OCI-LY7 (cell line): ENCODE measurements at regions of chr6 and their contacts with region 1.

Region 1: DNA sequence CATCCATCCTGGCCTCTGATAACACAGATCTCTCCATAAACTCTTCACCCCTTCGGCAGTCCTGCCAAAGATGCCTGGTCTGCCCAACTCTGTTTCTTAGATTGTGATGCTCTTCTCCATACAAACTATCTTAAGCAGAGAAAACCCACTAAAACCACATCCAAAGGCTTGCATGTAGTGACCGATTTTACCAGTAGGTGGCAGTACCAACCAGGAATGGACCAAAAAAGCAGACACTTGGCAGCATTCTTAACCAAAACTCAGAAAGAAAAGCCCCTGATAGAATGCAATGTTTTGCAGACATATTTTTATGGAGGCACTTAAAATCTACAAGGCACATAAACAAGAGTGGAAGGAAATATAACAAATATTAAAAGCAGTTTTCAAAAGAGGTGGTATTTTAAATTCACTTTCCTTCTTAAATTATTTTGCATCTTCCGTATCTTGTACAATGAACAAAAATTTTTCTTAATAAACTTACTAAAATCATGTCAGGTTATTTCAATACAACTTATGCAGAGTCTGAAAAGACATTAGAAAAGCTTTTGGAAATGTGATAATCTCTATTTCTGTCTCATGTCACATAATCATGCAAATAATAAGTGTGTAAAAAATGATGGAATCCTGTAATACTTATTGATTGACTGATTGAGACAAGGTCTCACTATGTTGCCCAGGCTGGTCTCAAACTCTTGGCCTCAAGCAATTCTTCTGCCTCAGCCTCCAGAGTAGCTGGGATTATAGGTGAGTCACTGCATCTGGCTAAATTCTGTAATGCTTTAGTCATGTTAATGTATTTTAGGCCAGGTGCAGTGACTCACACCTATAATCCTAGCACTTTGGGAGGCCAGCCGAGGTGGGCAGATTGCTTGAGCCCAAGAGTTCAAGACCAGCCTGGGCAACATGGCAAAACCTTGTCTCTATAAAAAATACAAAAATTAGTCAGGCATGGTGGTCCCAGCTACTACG is 29.4 kb downstream of the LRP11 start:
- DNase-seq: peak; percentile 69
- H3K4me3 ChIP-seq: no peak overlapping the region
- H3K27ac ChIP-seq: no peak overlapping the region
- H3K4me1 ChIP-seq: peaks cover 9% of the 10 kb centered on the region
- CTCF ChIP-seq: peak; percentile 99

Region 2: GRCh38 chr6:149711711-149712110 is 123.1 kb before region 1 on chr6:
- CTCF ChIA-PET with region 1: no interaction called
- POLR2A ChIA-PET with region 1: no interaction called
- intact Hi-C with region 1: no loop called
- DNase-seq: no peak
- H3K4me3 ChIP-seq: no peak overlapping the region
- H3K27ac ChIP-seq: no peak overlapping the region
- H3K4me1 ChIP-seq: peaks cover 42% of the 10 kb centered on the region
- CTCF ChIP-seq: no peak

Region 3: DNA sequence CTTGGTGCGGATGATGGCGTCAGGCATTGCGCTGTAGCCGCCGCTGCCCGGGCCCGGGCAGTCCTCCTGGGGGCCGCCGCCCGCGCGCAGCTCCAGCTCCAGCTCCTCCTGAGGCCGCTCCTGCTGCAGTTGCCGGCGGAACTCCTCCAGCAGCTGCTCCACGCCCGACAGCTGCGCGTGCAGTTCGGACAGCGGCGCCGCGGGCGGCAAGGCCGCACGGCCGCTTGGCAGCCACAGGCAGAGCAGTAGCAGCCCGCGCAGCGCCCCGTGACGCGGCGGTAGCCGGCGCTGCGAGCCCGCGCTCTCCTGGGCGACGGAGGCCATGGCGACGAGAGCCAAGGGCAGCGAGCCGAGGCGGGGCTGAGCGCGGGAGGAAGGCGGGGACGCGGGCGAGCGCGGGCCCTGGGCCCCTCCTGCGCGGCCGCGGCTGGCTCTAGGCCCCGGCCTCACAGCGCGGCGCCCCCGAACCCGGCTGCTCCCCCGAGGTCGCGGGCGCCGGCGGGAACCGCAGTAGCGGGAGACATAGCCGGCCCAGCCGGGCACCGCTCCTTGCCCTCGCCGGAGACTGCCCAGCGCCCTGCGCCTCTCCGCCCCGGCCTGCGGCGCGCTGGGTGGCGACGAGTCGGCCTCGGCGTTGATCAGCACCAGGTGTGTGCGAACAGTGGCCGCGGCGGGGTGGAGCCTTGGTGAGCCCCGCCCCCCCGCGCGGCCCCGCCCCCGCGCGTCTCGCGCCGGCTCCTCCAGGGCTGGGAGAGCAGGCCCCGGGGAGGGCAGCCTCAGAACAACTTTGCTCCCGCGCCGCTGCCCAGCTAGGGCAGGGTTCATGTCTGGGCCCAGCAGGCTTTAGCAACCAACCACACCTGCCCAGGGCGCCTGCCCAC is 29.1 kb after region 1 on chr6 and contains the start of gene LRP11:
- CTCF ChIA-PET with region 1: no interaction called
- POLR2A ChIA-PET with region 1: no interaction called
- intact Hi-C with region 1: loop called (anchors 2 kb)
- DNase-seq: peak; percentile 84
- H3K4me3 ChIP-seq: peak within 1 kb of the TSS; percentile 72
- H3K27ac ChIP-seq: no peak within 1 kb of the TSS
- H3K4me1 ChIP-seq: peaks cover 13% of the 10 kb centered on the region
- CTCF ChIP-seq: no peak
- total RNA-seq, gene LRP11: 1.1 and 1.5 TPM in 2 replicates

Region 4: DNA sequence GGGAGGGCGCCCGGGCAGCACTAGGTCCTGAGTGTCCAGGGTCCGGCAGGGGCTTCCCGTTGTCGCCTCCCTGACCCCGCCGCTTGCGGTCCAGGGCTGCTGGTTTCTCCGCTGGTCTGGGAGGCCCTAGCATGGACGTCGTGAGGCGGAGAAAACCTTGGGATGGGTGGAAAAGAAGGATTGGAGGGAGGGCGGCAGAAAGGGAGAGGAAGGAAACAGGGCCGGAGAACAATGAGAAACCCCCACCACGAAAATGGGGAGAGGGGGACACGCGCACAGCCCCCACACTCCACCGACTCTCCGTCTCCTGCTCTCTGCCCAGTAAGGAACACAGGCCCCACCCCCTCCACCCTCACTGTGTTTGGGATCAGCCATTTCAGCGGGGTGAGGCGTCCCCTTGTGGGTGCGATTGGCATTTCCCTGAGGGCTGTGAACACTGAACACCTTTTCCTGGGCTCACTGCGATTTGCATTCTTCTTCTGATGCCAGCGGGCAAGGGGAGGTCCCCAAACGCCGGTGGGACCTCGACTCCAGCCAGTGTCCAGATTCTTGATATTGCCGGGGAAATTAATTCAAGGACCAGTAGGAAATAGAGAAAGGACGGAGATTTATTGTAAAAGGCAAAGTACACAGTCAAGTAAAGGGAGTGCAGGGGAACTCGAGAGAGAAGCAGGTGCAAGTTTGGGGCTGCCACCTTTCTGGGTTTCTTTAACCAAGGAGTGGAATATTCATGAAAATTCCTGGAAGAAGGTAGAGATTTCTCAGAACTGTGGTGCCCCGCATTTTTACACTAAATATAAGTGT is 91.4 kb after region 1 on chr6:
- CTCF ChIA-PET with region 1: interaction called, 4 read pairs
- POLR2A ChIA-PET with region 1: no interaction called
- intact Hi-C with region 1: loop called (anchors 1 kb)
- DNase-seq: peak; percentile 75
- H3K4me3 ChIP-seq: peak overlapping the region; percentile 22
- H3K27ac ChIP-seq: no peak overlapping the region
- H3K4me1 ChIP-seq: peaks cover 11% of the 10 kb centered on the region
- CTCF ChIP-seq: peak; percentile 83